Heart right ventricle (tissue), 16 donors: ENCODE measurements at regions of chr1 and their contacts with region 1.

Region 1: GRCh38 chr1:209643285-209644020 is 8.8 kb downstream of the LAMB3 start:
- DNase-seq: peak; percentile 71 to 88
- ATAC-seq: peak; percentile 44 to 86 (median 78)
- H3K4me3 ChIP-seq: no peak overlapping the region
- H3K27ac ChIP-seq: peak overlapping the region; percentile 5 to 98 (median 88)
- H3K4me1 ChIP-seq: peaks cover 36 to 79% (median 75%) of the 10 kb centered on the region in 9 donors
- H3K27me3 ChIP-seq: no peaks in the 10 kb centered on the region
- CTCF ChIP-seq: peak in 3 of 9 donors; percentile 25 to 39 (median 37)

Region 2: GRCh38 chr1:209674957-209675564 is 31.6 kb after region 1 on chr1 and contains the start of gene G0S2:
- intact Hi-C with region 1: loop called in 6 of 10 experiments (anchors 2 to 5 kb)
- DNase-seq: peak; percentile 81 to 86
- ATAC-seq: peak; percentile 85 to 95 (median 93)
- H3K4me3 ChIP-seq: peak within 1 kb of the TSS; percentile 30 to 77 (median 64)
- H3K27ac ChIP-seq: peak within 1 kb of the TSS; percentile 41 to 93 (median 82)
- H3K4me1 ChIP-seq: peaks cover 8 to 52% (median 33%) of the 10 kb centered on the region in 9 donors
- H3K27me3 ChIP-seq: peaks cover 0 to 37% (median 0%) of the 10 kb centered on the region in 7 donors
- CTCF ChIP-seq: no peak
- total RNA-seq, gene G0S2: 75.3 to 491 (median 131) TPM